HAP-1 (cell line): ENCODE measurements at regions of chr12 and their contacts with region 1.

Region 1: GRCh38 chr12:56117778-56118687 is at the start of gene ZC3H10:
- DNase-seq: peak; percentile 97 to 99
- H3K4me3 ChIP-seq: peak within 1 kb of the TSS; percentile 83
- H3K4me1 ChIP-seq: peaks cover 12% of the 10 kb centered on the region
- H3K27me3 ChIP-seq: no peaks in the 10 kb centered on the region

Region 2: GRCh38 chr12:54279866-54280467 is 1838.1 kb before region 1 on chr12 and contains the start of gene CBX5:
- in situ Hi-C with region 1: loop called (anchors 25 kb)
- DNase-seq: peak; percentile 99
- H3K4me3 ChIP-seq: peak within 1 kb of the TSS; percentile 82
- H3K4me1 ChIP-seq: peaks cover 23% of the 10 kb centered on the region
- H3K27me3 ChIP-seq: no peaks in the 10 kb centered on the region

Region 3: DNA sequence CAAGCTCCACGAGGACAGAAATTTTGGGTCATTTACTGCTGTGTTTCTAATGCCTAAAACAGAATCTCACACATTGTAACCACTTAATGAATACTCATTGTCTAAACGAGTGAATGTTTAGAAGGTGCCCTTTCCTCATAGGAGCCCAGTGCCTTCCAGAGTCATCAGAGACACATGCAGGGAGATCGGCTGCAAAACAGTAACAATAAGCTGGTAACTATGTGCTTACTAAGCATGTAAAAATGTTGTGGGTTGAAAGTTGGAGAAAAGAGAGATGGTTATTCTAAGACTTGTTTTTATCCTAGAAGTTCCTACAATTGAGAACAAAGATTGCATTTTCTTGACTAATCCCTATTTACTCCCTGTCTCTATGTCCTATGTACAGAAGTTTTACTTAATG is 1140.9 kb before region 1 on chr12:
- in situ Hi-C with region 1: no loop called
- DNase-seq: no peak
- H3K4me3 ChIP-seq: no peak overlapping the region
- H3K4me1 ChIP-seq: no peaks in the 10 kb centered on the region
- H3K27me3 ChIP-seq: peaks cover 2% of the 10 kb centered on the region; the same call in 1 of the 2 replicates

Region 4: GRCh38 chr12:55738123-55739024 is 379.7 kb before region 1 on chr12:
- in situ Hi-C with region 1: loop called (anchors 10 kb)
- DNase-seq: peak; percentile 95
- H3K4me3 ChIP-seq: peak overlapping the region; percentile 31
- H3K4me1 ChIP-seq: peaks cover 14% of the 10 kb centered on the region
- H3K27me3 ChIP-seq: no peaks in the 10 kb centered on the region

Region 5: DNA sequence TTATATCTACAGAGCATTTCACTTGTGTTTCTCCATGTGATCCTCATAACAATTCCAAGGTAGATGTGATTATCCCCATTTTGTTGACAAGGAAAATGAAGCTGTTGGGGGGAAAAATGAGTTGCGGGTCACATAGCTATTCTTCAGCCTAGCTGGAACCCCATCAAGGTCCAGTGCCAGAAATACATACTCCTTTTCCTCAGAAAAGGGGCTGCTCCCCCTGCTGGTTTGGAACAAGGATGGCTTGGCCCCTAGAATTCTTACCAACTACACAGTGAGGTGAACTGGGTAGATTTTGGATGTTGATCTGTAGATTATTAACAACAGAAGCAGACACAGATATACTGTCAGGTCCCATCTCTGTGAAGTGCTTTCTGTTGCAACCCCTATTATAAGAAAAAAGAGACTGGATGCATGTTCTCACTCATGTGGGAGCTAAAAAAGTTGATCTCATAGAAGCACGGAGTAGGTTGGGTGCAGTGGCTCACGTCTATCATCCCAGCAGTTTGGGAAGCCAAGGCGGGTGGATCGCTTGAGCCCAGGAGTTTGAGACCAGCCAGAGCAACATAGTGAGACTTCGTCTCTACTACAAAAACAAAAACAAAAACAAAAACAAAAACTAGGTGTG is 88.3 kb before region 1 on chr12:
- in situ Hi-C with region 1: no loop called
- DNase-seq: peak; percentile 49 to 64
- H3K4me3 ChIP-seq: no peak overlapping the region
- H3K4me1 ChIP-seq: no peaks in the 10 kb centered on the region
- H3K27me3 ChIP-seq: no peaks in the 10 kb centered on the region

Region 6: DNA sequence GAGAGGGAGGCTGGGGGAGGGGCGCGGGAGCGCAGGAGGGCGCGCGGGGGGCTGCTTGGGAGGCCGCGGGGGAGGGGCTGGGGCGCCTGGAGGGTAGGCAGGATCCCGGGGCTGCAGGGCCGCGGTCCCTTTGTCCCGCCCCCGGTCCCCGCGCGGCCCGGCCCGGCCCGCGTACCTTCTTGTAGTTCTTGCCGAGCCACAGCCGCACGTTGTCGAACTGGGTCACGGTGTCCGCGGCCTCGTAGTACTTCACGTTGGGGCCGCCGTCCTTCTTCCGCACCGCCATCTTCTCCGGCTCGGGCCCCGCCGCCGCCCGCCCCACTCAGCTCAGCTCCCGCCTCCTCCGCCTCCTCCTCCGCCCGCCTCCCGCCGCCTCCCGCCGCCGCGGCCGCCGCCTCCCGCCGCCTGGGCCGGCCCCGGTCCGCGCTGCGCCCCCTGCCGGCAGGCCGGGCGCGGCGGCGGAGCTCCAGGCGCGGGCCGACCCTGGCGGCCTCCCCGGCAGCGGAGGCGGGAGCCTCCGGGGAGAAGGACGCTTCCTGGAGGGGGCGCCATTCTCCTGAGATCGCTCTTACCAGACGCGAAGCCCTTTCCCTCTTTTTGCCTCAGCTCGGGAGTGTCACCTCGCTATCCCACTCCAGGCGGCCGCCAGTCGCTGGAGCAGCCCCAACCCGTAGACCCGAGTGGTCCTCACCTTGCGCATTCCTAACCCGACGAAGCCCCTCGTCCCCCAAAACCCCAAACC is 71.3 kb after region 1 on chr12 and contains the start of gene SMARCC2:
- in situ Hi-C with region 1: loop called (anchors 5 kb)
- DNase-seq: peak; percentile 85 to 94
- H3K4me3 ChIP-seq: peak within 1 kb of the TSS; percentile 59
- H3K4me1 ChIP-seq: peaks cover 11% of the 10 kb centered on the region
- H3K27me3 ChIP-seq: no peaks in the 10 kb centered on the region